ENCODE measurements at regions of chr12 and their contacts with region 1.

Region 1: DNA sequence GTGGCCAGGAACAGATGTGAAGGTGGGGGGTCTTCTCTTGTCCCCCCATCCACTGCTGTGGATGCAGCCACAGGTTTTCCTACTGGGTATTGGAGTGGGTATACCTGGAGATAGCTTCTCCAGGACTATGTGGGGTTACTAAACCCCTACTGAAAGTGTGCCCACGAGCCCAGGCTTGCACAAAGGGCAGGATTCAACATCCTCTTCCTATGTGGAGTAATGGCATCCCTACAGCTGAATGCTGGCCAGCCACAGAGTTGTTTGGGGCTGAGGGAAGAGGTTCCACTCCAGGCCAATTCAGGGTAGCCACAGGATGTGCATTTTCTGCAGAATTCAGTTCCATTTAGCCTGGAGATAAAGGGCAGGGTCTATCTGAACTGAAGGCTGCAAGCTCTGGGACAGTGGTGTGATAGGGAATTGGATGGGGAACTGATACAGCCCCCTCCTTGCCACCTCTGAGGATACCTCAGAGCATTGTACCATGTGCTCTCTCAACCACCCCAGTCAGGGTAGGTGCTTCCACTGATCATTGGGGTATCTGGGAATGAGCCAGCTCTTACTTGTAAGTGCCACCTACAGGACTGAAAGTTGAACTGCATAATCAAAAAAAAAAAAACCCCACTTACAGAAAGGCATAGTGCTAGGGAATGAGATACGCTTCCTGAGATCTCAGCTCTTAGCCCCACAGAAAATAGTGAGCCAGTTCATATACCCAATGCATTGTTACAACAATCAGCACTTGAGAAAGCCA is 187.1 kb downstream of the KITLG start:
- DNase-seq: no peak
- H3K4me3 Mint-ChIP-seq: no peak overlapping the region
- H3K27ac Mint-ChIP-seq: no peak overlapping the region
- H3K4me1 Mint-ChIP-seq: peaks cover 14% of the 10 kb centered on the region
- H3K27me3 Mint-ChIP-seq: peaks cover 6% of the 10 kb centered on the region

Region 2: DNA sequence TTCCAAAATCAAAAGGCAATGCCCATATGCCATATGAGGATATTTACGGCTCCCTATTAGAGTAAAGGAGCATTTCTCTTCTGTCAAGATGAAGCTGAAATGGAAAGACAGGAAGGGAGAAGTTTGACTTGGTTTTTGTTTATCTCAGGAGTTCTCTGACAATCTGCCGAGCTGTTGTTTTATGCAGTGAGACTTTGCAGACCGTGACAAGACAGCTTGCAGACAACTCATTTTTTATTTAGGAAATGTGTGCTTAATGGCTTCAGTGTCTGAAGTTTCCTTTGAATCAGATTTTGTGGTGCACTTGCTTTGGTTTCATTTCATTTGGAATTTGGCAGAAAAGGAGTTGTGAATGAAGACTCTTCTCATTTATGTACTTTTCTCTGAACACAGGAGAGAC is 509.4 kb before region 1 on chr12:
- intact Hi-C with region 1: no loop called
- DNase-seq: no peak
- H3K4me3 Mint-ChIP-seq: no peak overlapping the region
- H3K27ac Mint-ChIP-seq: no peak overlapping the region
- H3K4me1 Mint-ChIP-seq: no peaks in the 10 kb centered on the region
- H3K27me3 Mint-ChIP-seq: no peaks in the 10 kb centered on the region

Region 3: DNA sequence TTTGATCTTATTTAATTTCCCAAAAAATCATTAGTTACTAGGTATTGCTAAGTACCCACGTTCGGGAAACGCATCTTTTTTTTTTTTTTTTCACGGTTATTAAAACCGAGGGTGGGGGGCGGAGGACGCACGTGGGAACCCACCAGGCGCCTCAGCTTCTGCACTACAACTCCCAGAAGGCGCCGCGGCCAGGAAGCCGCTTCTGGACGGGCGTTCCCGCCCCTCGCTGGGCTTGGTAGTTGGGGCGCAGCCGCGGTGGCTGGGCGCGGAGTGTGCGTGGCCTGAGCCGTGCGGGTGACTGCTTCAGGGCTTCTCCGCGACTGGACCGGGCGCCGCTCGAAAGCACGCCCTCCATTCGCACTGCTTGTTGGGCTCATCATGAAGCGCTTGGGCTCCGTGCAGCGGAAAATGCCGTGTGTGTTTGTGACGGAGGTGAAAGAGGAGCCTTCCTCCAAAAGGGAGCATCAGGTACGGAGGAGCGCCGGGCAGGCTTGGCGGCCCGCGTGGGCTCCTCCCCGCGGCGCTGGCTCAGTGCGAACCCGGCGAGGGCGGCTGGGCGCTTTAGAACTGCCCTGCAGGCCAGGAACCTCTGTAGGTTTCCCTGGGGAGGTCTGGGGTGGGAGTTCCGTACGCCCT is 357.8 kb before region 1 on chr12:
- intact Hi-C with region 1: loop called (anchors 1 kb)
- DNase-seq: peak; percentile 84
- H3K4me3 Mint-ChIP-seq: peak overlapping the region; percentile 98
- H3K27ac Mint-ChIP-seq: peak overlapping the region; percentile 96
- H3K4me1 Mint-ChIP-seq: peaks cover 55% of the 10 kb centered on the region
- H3K27me3 Mint-ChIP-seq: no peaks in the 10 kb centered on the region

Region 4: GRCh38 chr12:88111074-88111652 is 282.0 kb before region 1 on chr12:
- intact Hi-C with region 1: loop called (anchors 1 kb)
- DNase-seq: no peak
- H3K4me3 Mint-ChIP-seq: no peak overlapping the region
- H3K27ac Mint-ChIP-seq: no peak overlapping the region
- H3K4me1 Mint-ChIP-seq: no peaks in the 10 kb centered on the region
- H3K27me3 Mint-ChIP-seq: no peaks in the 10 kb centered on the region

Region 5: DNA sequence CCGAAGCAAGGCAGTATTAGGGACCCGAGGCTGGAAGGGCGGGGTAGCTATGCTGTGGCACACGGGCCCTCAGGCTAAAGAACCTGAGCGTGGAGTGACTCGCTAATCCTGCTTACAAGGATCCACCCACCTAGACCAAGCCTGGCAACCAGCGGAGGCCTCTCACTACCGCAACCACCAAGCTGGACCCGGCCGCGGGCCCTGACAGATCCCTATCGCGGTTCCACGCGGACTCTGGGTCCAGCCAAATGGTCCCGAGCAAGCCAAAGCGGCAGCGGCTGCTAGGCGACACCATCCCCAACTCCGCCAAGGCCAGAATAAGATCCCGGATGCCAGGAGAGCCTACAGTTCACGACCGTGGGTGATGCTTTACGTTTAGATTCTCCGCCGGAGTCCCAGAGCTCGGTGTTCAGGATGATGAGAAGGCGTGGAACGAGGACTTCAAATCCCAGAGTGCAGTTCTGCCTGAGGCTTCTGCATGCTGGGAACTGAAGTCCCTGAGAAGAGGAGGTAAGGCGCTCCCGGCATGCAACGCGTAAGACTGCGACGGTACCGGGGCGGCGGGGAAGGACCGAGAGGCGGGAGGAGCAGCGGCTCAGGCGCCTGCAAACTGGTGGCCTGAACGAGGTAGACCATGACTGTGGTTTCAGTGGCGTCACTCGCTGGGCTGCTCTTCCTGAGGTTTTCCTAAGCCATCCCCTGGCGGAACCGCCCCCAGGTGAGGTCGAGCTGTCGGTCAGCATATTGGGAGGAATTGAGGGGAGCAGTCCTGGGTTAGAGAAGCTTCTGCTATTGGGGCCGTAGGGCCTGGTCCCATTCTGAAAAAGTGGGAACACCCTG is 251.2 kb before region 1 on chr12 and contains the starts of genes CEP290 and TMTC3:
- intact Hi-C with region 1: loop called (anchors 1 kb)
- DNase-seq: peak; percentile 92
- H3K4me3 Mint-ChIP-seq: peak within 1 kb of the TSS; percentile 91
- H3K27ac Mint-ChIP-seq: peak within 1 kb of the TSS; percentile 95
- H3K4me1 Mint-ChIP-seq: peaks cover 34% of the 10 kb centered on the region
- H3K27me3 Mint-ChIP-seq: no peaks in the 10 kb centered on the region
- total RNA-seq, gene CEP290: 15.5 and 17.0 TPM in 2 replicates
- total RNA-seq, gene TMTC3: 6.9 and 7.1 TPM in 2 replicates

Region 6: GRCh38 chr12:88235183-88235833 is 157.9 kb before region 1 on chr12:
- intact Hi-C with region 1: loop called (anchors 1 kb)
- DNase-seq: no peak
- H3K4me3 Mint-ChIP-seq: no peak overlapping the region
- H3K27ac Mint-ChIP-seq: peak overlapping the region; percentile 45
- H3K4me1 Mint-ChIP-seq: peaks cover 9% of the 10 kb centered on the region
- H3K27me3 Mint-ChIP-seq: no peaks in the 10 kb centered on the region

Region 7: DNA sequence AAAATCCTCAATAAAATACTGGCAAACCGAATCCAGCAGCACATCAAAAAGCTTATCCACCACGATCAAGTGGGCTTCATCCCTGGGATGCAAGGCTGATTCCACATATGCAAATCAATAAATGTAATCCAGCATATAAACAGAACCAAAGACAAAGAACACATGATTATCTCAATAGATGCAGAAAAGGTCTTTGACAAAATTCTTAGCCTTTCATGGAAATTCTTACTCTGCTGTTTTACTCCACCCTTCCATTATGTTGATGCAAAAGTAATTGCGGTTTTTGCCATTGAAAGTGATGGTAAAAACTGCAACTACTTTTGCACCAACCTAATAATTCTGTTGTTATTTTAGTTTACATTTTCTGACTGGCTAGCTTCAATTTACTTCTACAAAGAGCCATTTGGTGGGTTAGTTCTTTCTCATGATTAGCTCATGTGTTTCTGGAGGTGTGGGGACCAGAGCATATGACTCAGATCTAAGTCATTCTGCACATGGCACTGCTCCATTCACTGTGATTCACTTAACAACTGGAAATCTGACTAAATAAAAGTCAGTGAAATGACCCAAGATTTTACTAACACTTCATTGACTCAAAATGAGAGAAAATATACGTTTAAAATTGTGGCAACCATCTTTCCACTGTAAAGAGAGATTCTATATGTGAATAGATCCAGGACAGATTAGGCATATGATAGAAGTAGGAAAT is 151.2 kb before region 1 on chr12:
- intact Hi-C with region 1: loop called (anchors 2 kb)
- DNase-seq: no peak
- H3K4me3 Mint-ChIP-seq: no peak overlapping the region
- H3K27ac Mint-ChIP-seq: peak overlapping the region; percentile 75
- H3K4me1 Mint-ChIP-seq: peaks cover 28% of the 10 kb centered on the region
- H3K27me3 Mint-ChIP-seq: no peaks in the 10 kb centered on the region